ENCODE measurements at regions of chr1 and their contacts with region 1.

Region 1: GRCh38 chr1:63367215-63368103 is at the start of gene ALG6:
- DNase-seq: peak; percentile 97
- ATAC-seq: peak; percentile 93
- H3K4me3 ChIP-seq: peak within 1 kb of the TSS; percentile 95
- H3K27ac ChIP-seq: 0 out of 2 replicates have a peak within 1 kb of the TSS, but pooled peaks have one; percentile 15
- H3K4me1 ChIP-seq: peaks cover 8% of the 10 kb centered on the region
- H3K27me3 ChIP-seq: no peaks in the 10 kb centered on the region
- CTCF ChIP-seq: no peak
- total RNA-seq, gene ALG6: 16.0 and 17.3 TPM in 2 replicates

Region 2: GRCh38 chr1:63454269-63454668 is 86.8 kb after region 1 on chr1:
- CTCF ChIA-PET with region 1: no interaction called
- POLR2A ChIA-PET with region 1: no interaction called
- intact Hi-C with region 1: loop called (anchors 5 kb)
- DNase-seq: peak; percentile 36
- ATAC-seq: peak; percentile 42; the same call in 1 of the 2 replicates
- H3K4me3 ChIP-seq: no peak overlapping the region
- H3K27ac ChIP-seq: no peak overlapping the region
- H3K4me1 ChIP-seq: no peaks in the 10 kb centered on the region
- H3K27me3 ChIP-seq: no peaks in the 10 kb centered on the region
- CTCF ChIP-seq: peak; percentile 50

Region 3: DNA sequence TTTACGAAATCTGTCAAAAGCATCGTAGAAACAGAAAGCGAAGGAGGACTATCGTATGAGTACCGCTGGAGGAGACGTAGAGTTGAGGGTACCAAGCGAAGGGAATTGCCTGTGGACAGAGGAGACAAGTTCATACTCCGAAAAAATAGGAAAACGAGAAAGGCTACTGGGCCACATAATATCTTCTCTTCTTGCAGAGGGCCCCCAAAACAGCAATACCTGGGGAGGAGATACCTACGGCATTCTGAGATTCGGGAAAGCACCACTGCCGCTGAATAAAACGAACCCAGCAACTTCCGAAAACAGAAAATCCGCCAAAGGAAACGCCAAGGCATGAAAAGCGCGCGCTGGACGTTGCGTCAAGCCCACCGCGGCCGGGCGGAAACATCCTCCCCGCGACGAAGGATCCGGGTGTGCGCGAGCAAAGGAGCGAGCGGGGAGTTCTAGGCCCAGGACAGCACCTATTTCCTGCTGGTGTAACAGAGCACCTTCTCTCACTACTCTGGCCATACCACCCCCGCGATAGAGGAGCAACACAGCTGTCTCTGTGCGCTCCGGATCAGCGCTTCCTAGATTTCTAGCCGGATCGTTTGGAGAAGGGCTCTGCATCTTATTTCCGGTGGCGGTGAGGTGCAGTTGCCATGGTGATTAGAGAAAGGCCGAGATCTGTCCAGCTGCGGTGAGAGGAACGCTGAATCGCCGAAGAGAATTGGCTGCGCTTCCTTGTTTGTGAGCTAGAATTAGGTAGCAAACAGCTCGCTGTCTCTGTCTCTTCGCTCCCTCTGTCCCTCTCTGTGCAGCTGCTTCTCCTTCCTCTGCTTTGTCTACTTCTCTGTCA is 155.7 kb after region 1 on chr1 and contains the starts of genes EFCAB7 and ITGB3BP:
- CTCF ChIA-PET with region 1: no interaction called
- POLR2A ChIA-PET with region 1: no interaction called
- intact Hi-C with region 1: loop called (anchors 5 kb)
- DNase-seq: peak; percentile 95
- ATAC-seq: peak; percentile 95
- H3K4me3 ChIP-seq: peak within 1 kb of the TSS; percentile 90
- H3K27ac ChIP-seq: peak within 1 kb of the TSS; percentile 86
- H3K4me1 ChIP-seq: peaks cover 24% of the 10 kb centered on the region
- H3K27me3 ChIP-seq: no peaks in the 10 kb centered on the region
- CTCF ChIP-seq: no peak
- total RNA-seq, gene EFCAB7: 3.6 and 4.5 TPM in 2 replicates
- total RNA-seq, gene ITGB3BP: 31.3 and 44.8 TPM in 2 replicates